Left ventricle myocardium inferior (tissue), 1 donor: ENCODE measurements at regions of chr12 and their contacts with region 1.

Region 1: GRCh38 chr12:100733817-100734593 is 60.6 kb upstream of the ANO4 start:
- DNase-seq: no peak
- H3K4me3 ChIP-seq: no peak overlapping the region
- H3K27ac ChIP-seq: no peak overlapping the region
- H3K4me1 ChIP-seq: no peaks in the 10 kb centered on the region
- H3K27me3 ChIP-seq: peaks cover 63% of the 10 kb centered on the region
- CTCF ChIP-seq: peak; percentile 68

Region 2: DNA sequence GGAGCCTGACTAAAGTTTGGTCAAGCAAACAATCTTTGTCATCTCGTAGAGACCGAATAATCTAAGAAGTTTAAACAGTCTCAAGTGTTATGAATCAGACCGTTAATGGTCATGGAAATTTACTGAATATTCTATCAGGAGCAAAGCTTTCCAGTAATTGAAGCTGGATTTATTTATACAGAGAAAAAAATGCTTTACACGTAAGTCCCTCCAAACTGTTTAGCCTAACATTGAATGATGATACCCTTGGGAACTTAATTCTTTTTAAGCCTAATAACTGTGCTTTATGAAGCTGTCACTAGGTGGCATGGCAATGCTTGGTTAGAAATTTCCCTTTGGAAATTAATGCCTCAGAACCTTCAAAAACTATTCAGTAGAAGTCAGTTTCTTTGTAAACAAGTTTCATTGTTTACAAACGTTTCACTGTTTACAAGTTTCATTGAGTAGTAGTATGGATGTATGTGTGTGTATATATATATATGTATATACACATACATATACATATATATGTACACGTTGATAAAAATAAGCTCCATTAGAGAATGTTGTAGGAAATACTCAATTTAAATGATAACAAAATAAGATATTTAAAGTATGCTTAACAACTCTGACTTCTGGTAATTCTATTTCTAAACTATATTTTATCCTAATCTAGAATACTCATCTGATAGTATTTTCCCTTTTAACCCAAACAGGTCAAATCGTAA is 499.3 kb before region 1 on chr12:
- intact Hi-C with region 1: loop called (anchors 10 kb)
- DNase-seq: no peak
- H3K4me3 ChIP-seq: no peak overlapping the region
- H3K27ac ChIP-seq: peak overlapping the region; percentile 34
- H3K4me1 ChIP-seq: no peaks in the 10 kb centered on the region
- H3K27me3 ChIP-seq: no peaks in the 10 kb centered on the region
- CTCF ChIP-seq: peak; percentile 81